Activated T-helper 1 cell treated with anti-CD3 and anti-CD28 coated beads, Interleukin-12 subunit alpha, Interleukin-12 subunit beta, Interleukin-2, Interleukin-4 antibody, amounts not matched to agents 30 ng/mL and 10 ng/mL and 1 ng/mL, durations not matched to agents 14 hours and 24 hours and 36 hours (primary cell): ENCODE measurements at regions of chr1 and their contacts with region 1.

Region 1: DNA sequence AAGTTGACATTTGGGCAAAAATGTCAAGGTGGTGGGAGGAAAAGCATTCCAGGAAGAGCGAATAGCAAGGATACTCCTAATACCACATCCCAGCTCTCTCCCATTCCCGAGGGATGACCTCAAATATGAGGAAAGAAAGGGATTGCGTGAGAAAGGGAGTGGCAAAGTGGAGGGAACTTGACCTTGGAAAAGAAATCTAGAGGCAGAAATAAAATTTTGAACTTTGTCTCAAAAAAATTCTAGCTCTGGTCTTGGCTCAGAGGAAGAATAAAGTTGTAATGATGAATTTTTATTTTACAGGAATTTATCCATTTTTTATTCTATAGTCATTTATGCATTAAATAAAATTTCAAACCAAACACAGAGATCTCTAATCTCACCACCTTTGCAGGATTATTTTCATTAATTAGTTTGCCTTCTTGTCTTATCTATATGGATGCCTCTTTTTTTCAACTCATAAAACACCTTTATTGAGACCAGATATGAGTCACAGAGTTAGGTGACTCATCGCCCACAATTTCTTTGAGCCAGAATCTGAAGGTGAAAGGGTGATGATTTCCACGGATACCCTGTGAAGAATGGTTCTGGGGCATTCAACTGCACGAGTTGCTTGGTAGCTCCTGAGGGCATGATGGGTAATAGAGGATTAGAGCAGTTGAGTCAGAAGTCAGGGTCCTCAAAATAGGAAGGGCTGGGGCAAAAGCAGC is 128.0 kb downstream of the TBX19 start:
- DNase-seq: peak; percentile 64
- H3K4me3 Mint-ChIP-seq: peak overlapping the region; percentile 24
- H3K27ac Mint-ChIP-seq: peak overlapping the region; percentile 86
- H3K4me1 Mint-ChIP-seq: peaks cover 42% of the 10 kb centered on the region
- H3K27me3 Mint-ChIP-seq: no peaks in the 10 kb centered on the region

Region 2: DNA sequence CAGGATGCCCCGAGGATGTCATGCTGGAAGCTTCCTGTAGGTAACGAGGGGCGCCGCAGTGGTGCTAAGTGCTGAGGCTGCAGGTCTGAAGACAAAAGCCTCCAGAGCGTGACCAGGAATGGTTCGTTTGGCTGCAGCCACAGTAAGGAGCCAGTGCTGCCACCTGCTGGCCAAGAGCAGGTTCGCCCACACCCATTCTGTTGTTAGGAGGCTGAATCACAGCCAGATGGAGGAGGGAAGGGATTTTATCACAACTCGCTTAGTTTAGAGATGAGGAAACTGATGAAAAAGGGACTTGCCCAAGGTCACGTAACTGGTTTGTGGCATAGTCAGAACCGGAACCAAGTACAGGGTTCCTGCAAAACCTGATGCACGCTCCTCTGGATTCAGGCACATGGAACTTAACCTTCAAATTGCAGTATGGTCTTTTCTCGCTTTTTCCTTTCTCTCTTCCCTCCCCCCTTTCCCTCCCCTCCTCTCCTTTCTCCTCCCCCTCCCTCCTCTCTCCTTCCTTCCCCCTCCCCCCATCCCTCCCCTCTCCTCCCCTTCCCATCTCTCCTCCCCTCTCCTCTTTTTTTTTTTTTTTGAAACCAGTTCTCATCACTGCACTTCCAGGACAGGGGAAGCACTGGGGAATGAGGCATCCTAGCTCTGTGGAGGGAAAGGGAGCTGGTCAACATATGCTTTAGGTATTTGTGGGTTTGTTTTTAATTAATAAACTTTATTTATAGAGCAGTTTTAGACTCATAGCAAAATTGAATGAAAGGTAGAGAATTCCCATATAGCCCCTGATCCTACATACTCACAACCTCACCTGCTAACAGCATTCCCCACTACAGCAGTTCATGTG is 605.1 kb before region 1 on chr1:
- intact Hi-C with region 1: loop called (anchors 10 kb)
- DNase-seq: peak; percentile 84
- H3K4me3 Mint-ChIP-seq: peak overlapping the region; percentile 58
- H3K27ac Mint-ChIP-seq: peak overlapping the region; percentile 87
- H3K4me1 Mint-ChIP-seq: peaks cover 41% of the 10 kb centered on the region
- H3K27me3 Mint-ChIP-seq: no peaks in the 10 kb centered on the region

Region 3: GRCh38 chr1:168234846-168235547 is 173.7 kb before region 1 on chr1:
- intact Hi-C with region 1: loop called (anchors 1 kb)
- DNase-seq: peak; percentile 39
- H3K4me3 Mint-ChIP-seq: peak overlapping the region; percentile 37
- H3K27ac Mint-ChIP-seq: peak overlapping the region; percentile 82
- H3K4me1 Mint-ChIP-seq: peaks cover 76% of the 10 kb centered on the region
- H3K27me3 Mint-ChIP-seq: no peaks in the 10 kb centered on the region

Region 4: DNA sequence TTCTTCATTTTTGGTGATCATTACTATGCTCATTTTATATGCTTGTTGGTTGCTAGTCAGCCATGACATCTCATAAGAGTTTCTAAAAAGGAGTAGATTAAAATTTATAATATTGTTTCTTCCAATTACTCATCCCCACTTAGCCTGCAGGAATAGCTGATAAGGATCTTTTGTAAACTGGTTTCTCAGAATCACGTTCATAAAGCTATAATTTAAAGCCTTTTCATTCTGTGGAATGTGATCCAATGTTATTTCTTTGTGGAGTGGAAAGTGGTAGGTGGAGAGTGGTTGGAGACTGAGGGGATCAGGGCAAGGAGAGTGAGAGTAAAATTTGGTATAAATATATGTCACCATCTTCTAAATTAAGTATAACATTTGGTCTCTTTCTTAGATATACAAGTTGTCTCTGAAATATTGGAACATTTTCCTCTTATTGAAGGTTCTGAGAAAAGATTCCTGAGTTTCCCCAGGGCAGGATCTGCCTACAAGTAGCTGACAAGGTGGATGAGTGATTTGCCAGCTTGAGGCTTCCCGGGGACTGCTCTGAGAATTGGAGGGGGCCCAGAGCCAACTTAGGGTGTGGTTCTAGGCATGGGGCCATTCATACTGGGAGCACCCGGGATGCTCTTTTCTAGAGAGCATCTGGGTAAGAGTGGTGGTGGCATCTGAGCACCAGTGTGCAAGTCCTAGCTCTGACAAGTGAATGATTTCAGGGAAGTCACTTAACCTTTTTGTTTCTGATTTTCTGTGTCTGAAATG is 11.6 kb before region 1 on chr1:
- intact Hi-C with region 1: loop called (anchors 1 kb)
- DNase-seq: no peak
- H3K4me3 Mint-ChIP-seq: no peak overlapping the region
- H3K27ac Mint-ChIP-seq: no peak overlapping the region
- H3K4me1 Mint-ChIP-seq: peaks cover 38% of the 10 kb centered on the region
- H3K27me3 Mint-ChIP-seq: peaks cover 22% of the 10 kb centered on the region

Region 5: DNA sequence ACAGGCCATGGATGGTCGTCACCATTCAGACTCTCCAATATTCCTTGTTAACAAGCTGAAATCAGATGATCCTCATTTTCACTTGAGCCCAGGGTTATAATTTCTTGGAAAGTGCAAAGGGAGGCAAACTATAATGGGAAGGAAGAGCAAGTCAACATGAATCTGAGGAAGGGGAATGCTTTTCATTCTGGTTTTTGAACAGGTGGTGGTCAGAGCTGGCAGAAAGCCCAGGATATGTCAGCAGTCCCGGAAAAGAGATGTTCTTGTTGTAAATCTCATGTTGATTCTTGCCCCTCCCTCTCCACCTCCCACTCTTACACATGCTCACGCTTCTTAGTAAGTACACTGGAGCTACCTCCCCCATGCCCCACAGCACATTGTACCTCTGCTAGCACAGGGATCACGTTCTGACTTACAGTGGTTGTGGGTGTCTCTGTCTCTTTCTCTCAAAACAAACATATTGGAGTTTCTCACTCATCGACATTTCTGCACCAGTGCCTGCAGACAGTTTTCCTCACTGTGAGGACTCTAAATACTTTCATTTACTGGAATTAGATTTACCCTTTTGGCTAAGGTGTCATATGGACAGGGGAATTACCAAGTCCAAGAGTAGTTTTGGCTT is 57.5 kb after region 1 on chr1:
- intact Hi-C with region 1: loop called (anchors 1 kb)
- DNase-seq: peak; percentile 18
- H3K4me3 Mint-ChIP-seq: peak overlapping the region; percentile 30
- H3K27ac Mint-ChIP-seq: peak overlapping the region; percentile 71
- H3K4me1 Mint-ChIP-seq: peaks cover 67% of the 10 kb centered on the region
- H3K27me3 Mint-ChIP-seq: no peaks in the 10 kb centered on the region

Region 6: DNA sequence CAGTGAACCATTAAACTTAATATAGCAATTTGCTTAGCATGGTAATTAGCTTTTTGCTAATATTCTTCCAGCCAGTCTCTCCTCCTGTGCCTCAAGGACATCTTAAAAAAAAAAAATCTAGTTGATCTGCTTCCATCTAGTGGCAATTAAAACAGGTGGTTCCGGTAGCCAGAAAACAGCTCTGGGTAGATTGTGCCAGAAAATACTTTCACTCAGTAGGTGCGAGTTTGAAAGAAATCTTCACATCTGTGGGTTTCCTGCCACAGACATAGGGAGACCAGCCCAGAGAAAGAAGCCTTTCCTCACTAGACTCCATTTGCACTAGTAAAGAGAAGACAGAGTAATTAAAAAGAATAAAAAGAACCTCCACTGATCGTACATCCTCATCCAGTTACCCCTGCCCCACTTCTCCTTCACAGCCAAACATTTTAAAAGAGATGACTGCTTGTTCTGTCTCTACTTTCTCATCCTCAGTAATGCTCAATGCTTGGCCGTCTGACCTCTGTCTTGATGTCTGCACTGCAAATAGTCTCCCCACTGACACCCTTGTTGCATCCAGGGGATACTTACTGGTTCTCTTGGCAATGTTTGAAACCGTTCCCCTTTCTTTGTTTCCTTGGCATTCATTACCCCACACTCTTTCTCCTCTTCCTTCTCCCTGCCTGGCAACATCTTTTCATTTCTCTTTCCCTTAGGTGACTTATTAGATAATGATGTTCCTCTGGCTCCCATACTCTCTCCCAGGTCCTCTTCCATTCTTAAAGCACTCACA is 1285.8 kb after region 1 on chr1:
- intact Hi-C with region 1: loop called (anchors 5 kb)
- DNase-seq: peak; percentile 56
- H3K4me3 Mint-ChIP-seq: peak overlapping the region; percentile 28
- H3K27ac Mint-ChIP-seq: peak overlapping the region; percentile 90
- H3K4me1 Mint-ChIP-seq: peaks cover 96% of the 10 kb centered on the region
- H3K27me3 Mint-ChIP-seq: no peaks in the 10 kb centered on the region